ENCODE measurements at regions of chr12 and their contacts with region 1.

Region 1: DNA sequence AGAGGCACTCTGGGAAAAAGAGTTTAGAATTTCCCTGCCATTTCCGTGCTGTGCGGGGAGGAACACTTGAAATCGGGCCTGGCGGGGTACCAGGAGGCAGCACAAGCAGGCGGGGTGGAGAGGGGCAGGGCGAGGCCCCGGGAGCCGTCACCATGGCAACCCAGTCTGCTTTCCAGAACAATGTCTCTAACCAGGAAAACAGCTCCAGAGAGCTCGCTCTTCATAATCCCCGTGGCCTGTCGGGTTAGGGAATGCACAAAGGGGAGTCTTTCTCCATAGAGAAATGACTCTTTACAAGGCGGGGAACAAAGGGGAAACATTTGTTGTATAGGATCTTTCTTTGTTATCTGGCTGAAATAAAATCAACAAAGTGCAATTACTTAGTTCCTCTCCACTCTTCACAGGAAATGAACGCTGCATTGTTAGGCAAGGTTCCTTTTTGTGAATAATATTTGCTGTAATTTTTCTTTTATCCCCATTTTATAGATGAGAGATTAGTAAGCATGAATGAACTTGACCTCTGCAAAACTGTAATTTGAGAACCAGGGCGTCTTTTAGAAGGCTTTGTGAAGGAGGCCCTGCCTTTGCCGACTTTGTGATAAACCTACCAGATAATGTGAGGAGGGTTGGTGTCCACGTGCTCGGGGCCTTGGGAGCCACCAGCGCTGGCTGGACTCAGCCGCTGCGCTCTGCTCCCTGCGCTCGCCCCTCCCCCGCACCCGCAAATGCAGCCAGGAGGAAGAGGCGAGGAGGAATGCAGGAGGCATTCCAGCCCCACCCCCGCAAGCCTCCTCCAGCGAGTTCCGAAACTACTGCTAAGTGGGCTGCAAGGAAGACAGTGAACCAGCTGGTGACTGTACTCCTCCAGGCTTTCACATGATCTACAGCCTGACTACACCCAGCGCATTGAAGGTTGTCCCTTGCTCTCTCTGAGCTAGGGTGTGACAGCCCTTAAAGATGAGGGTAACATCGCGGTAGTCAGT is 105.2 kb upstream of the ATF7IP start:
- DNase-seq: peak; percentile 91
- H3K4me3 ChIP-seq: peak overlapping the region; percentile 1 to 27
- H3K27ac ChIP-seq: peak overlapping the region; percentile 89 to 96
- H3K4me1 ChIP-seq: peaks cover 54% of the 10 kb centered on the region
- H3K27me3 ChIP-seq: no peaks in the 10 kb centered on the region
- CTCF ChIP-seq: no peak
- POLR2A ChIP-seq: no peak

Region 2: GRCh38 chr12:14216405-14217294 is 43.7 kb before region 1 on chr12:
- intact Hi-C with region 1: no loop called
- DNase-seq: no peak
- H3K4me3 ChIP-seq: no peak overlapping the region
- H3K27ac ChIP-seq: no peak overlapping the region
- H3K4me1 ChIP-seq: no peaks in the 10 kb centered on the region
- H3K27me3 ChIP-seq: no peaks in the 10 kb centered on the region
- CTCF ChIP-seq: no peak
- POLR2A ChIP-seq: no peak

Region 3: DNA sequence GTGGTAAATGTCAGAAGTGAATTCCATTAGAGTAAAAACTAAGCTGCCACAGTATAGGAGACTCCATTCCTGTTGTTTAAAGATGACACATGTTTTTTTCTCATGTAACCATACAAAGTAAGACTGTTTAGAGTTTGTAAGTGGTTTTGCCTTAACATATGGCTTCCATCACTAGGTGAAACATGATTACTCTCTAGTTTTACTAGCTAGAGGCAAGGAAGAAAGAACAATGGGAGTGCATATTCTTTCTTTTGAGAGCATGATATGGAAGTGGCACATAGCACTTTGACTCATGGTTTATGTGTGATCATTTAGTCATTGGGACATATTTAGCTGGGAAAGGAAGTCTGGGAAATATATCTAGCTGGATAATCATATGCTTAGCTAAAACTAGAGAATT is 112.9 kb after region 1 on chr12:
- intact Hi-C with region 1: loop called (anchors 5 kb)
- DNase-seq: no peak
- H3K4me3 ChIP-seq: no peak overlapping the region
- H3K27ac ChIP-seq: no peak overlapping the region
- H3K4me1 ChIP-seq: no peaks in the 10 kb centered on the region
- H3K27me3 ChIP-seq: no peaks in the 10 kb centered on the region
- CTCF ChIP-seq: no peak
- POLR2A ChIP-seq: no peak